AG04450 (cell line): ENCODE measurements at regions of chr11 and their contacts with region 1.

Region 1: DNA sequence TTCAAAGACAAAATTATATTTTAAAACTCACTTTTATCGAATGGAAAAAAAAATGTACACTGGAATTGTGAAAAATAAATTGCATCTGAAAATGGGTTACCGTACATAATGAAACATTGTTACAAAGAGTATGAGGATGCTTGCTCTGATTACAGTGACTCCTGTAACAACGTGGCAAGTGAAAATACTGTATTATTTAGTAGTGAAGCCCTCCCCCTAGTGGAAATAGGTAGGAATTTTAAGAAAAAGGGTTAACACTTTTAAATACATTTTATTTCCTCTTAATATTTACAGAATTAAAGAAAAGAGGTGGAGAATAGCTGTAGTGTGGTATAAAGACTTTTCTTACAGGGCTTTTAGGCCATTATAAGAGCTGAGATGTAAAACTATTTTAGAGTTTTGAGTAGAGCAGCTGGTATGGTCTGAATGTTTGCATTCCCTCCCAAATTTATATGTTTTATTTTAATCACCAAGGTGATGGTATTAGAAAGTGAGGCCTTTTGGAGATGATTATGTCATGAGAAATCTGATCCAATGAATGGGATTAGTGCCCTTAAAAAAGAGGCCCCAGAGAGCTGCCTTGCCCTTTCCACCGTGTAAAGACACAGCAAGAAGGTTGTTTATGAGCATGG is 25.2 kb downstream of the FAM76B start:
- DNase-seq: peak; percentile 38
- H3K4me3 ChIP-seq: no peak overlapping the region
- H3K27ac ChIP-seq: no peak overlapping the region
- H3K27me3 ChIP-seq: no peaks in the 10 kb centered on the region
- CTCF ChIP-seq: peak; percentile 63

Region 2: GRCh38 chr11:94814272-94814976 is 950.0 kb before region 1 on chr11:
- CTCF ChIA-PET with region 1: interaction called, 10 read pairs
- POLR2A ChIA-PET with region 1: no interaction called
- DNase-seq: no peak
- H3K4me3 ChIP-seq: no peak overlapping the region
- H3K27ac ChIP-seq: no peak overlapping the region
- H3K27me3 ChIP-seq: no peaks in the 10 kb centered on the region
- CTCF ChIP-seq: no peak

Region 3: DNA sequence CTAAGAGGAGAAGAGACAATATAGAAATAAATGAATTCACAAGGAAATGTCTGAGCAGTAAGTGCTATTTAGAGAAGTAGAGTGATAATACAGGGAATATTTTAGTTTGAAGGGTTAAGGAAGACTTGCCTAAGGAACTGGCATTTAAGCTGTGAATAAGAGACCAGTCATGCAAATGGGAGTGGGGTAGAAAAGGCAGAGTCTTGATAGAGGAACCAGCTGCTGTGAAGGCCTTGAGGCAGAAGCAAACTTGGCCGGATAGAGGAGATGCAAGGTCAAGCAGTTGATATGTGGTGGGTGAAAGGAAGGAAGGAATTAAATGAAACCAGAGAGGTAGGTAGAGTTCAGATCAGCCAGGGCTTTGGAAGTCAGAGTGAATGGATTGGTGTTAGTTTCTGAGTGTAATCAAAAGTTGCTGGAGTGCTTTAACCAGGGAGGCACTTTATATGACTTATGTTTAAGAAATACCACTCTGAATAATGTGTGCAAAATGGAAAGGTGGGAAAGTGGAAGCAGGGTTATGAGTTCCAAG is 334.9 kb before region 1 on chr11:
- CTCF ChIA-PET with region 1: no interaction called
- POLR2A ChIA-PET with region 1: no interaction called
- DNase-seq: no peak
- H3K4me3 ChIP-seq: no peak overlapping the region
- H3K27ac ChIP-seq: no peak overlapping the region
- H3K27me3 ChIP-seq: peaks cover 5% of the 10 kb centered on the region
- CTCF ChIP-seq: no peak

Region 4: GRCh38 chr11:95863486-95864140 is 99.2 kb after region 1 on chr11:
- CTCF ChIA-PET with region 1: no interaction called
- POLR2A ChIA-PET with region 1: no interaction called
- DNase-seq: peak; percentile 49
- H3K4me3 ChIP-seq: no peak overlapping the region
- H3K27ac ChIP-seq: no peak overlapping the region
- H3K27me3 ChIP-seq: no peaks in the 10 kb centered on the region
- CTCF ChIP-seq: no peak

Region 5: DNA sequence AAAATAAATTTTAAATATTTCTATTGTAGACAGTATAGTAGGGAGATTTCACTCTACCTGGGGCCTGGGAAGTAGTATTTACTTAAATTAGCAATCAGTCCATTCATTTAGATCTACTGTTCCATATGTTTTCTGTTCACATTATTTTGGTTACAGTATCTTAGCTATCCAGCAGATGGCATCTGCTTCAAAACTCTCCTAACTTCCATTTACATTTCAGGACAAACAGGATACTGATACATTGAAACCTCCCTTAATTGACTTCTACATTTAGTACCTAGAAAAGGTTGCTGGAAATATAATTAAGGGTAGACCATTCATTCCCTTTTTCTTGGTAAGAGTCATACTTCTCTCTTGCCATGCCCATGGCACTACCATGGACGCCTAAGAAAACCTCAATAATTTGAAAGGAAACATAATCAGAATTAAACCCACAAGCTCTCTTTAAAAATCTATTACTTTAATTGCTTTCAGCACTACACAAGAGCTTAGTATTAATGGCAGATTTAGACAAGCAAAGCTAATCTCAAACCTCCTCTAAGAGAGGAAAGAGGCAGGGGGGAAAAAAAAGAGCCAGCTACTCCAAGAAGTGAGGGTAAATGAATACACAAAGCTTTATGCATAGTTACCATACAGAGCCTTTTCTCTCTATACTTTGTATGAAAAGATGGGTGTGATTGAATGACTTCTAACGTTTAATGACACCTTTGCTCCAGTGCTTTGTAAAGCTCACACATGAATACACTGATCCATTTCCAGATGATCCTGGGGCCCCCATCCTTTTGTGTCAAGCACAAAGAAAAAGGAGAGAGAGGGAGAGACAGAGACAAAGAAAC is 290.7 kb after region 1 on chr11:
- CTCF ChIA-PET with region 1: no interaction called
- POLR2A ChIA-PET with region 1: no interaction called
- DNase-seq: no peak
- H3K4me3 ChIP-seq: no peak overlapping the region
- H3K27ac ChIP-seq: no peak overlapping the region
- H3K27me3 ChIP-seq: no peaks in the 10 kb centered on the region
- CTCF ChIP-seq: peak; percentile 68

Region 6: DNA sequence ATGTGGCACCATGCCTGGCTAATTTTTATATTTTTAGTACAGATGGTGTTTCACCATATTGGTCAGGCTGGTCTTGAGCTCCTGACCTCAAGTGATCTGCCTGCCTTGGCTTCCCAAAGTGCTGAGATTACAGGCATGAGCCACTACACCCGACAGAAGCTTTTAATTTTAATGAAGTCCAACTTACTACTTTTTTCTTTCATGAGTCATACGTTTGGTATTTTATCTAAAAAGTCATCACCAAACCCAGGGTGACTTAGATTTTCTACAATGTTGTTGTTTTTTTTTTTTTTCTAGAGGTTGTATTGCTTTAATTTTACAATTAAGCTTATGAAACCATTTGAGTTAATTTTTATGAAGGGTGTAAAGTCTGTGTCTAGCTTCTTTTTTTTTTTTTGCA is 660.3 kb after region 1 on chr11:
- CTCF ChIA-PET with region 1: interaction called, 13 read pairs
- POLR2A ChIA-PET with region 1: no interaction called
- DNase-seq: peak; percentile 3
- H3K4me3 ChIP-seq: no peak overlapping the region
- H3K27ac ChIP-seq: no peak overlapping the region
- H3K27me3 ChIP-seq: no peaks in the 10 kb centered on the region
- CTCF ChIP-seq: no peak